Motor neuron (in vitro differentiated cells): ENCODE measurements at regions of chrX and their contacts with region 1.

Region 1: DNA sequence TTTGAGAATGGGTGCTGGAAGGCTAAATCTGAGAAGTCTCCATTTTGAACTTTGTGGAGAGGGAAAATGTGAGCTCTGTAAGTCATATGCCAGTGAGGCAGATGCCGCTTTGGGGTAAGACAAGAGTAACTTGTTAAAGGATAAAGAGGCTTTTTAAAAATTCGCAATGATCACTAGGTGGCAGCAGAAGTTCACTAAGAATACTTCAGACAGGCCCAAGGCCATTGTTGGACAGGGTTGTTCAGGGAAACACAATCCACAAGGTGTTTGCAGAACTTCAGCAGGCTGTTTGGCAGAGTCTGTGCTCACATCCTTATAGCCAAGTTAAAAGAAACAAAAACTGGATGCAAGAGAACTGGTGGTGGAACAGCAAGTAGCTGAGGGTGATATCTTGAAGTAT is 13.7 kb upstream of the PIGA start:
- ATAC-seq: peak; percentile 39 to 81 (median 63)
- H3K4me3 ChIP-seq: no peak overlapping the region
- H3K27ac ChIP-seq: no peak overlapping the region
- H3K4me1 ChIP-seq: no peaks in the 10 kb centered on the region

Region 2: GRCh38 chrX:15087747-15088146 is 261.3 kb before region 1 on chrX:
- in situ Hi-C with region 1: no loop called
- ATAC-seq: no peak
- H3K4me3 ChIP-seq: no peak overlapping the region
- H3K27ac ChIP-seq: no peak overlapping the region
- H3K4me1 ChIP-seq: no peaks in the 10 kb centered on the region

Region 3: DNA sequence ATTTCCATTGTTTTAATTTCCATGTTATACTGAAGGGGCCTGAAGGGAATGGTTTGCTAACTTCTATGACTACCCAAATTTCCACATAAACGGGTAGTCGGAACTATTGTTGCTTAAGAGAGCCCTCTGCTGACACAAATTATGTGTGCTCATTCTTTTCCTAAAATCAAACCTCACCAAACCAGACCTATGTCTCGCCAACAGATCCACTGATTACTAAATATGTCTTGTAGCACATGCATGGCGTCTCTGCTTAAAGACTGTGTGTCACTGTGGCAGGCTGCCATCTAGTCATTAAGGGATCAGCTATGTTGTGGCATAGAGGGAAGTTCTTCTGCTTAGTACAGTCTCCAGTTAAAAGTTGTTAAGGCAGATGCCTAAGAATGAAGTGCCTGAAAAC is 119.0 kb after region 1 on chrX:
- in situ Hi-C with region 1: loop called in 3 of 9 experiments (anchors 10 kb)
- ATAC-seq: peak in 3 of 8 experiments; percentile 71 to 75 (median 74)
- H3K4me3 ChIP-seq: no peak overlapping the region
- H3K27ac ChIP-seq: no peak overlapping the region
- H3K4me1 ChIP-seq: no peaks in the 10 kb centered on the region

Region 4: DNA sequence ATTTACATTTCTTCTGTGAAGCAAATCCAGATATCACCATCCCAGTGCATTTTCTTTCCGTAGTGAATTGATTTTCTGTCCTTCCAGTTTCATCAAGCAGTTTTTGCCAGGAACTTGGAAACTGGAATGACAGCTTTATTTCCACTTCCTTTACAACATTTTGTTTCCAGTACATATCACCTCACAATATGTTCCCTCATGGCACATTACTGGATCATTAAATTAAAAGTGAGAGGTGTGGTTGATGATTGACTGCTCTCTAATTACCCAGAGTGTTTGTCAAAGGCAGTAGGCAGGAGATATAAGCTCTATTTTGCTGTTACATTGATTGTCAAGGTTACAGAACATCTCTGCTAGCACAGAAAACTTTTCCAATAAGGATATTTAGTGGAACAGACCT is 274.0 kb after region 1 on chrX:
- in situ Hi-C with region 1: no loop called
- ATAC-seq: no peak
- H3K4me3 ChIP-seq: no peak overlapping the region
- H3K27ac ChIP-seq: no peak overlapping the region
- H3K4me1 ChIP-seq: no peaks in the 10 kb centered on the region